ENCODE measurements at regions of chr16 and their contacts with region 1.

Region 1: GRCh38 chr16:66406534-66407221 is 20.4 kb upstream of the BEAN1 start:
- DNase-seq: peak; percentile 71 to 88
- H3K4me3 ChIP-seq: peak overlapping the region; percentile 34 to 77 (median 56)
- H3K27ac ChIP-seq: peak overlapping the region in 1 of 2 donors; percentile 33
- H3K4me1 ChIP-seq: peaks cover 0 to 7% of the 10 kb centered on the region in 2 donors
- H3K27me3 ChIP-seq: no peaks in the 10 kb centered on the region
- CTCF ChIP-seq: peak; percentile 89 to 96 (median 90)
- POLR2A ChIP-seq: no peak

Region 2: GRCh38 chr16:66483689-66484481 is 77.2 kb after region 1 on chr16:
- intact Hi-C with region 1: loop called (anchors 5 kb)
- DNase-seq: peak; percentile 60 to 80
- H3K4me3 ChIP-seq: no peak overlapping the region
- H3K27ac ChIP-seq: no peak overlapping the region
- H3K4me1 ChIP-seq: peaks cover 6 to 8% of the 10 kb centered on the region in 2 donors
- H3K27me3 ChIP-seq: no peaks in the 10 kb centered on the region
- CTCF ChIP-seq: peak; percentile 40 to 93 (median 84)
- POLR2A ChIP-seq: no peak

Region 3: DNA sequence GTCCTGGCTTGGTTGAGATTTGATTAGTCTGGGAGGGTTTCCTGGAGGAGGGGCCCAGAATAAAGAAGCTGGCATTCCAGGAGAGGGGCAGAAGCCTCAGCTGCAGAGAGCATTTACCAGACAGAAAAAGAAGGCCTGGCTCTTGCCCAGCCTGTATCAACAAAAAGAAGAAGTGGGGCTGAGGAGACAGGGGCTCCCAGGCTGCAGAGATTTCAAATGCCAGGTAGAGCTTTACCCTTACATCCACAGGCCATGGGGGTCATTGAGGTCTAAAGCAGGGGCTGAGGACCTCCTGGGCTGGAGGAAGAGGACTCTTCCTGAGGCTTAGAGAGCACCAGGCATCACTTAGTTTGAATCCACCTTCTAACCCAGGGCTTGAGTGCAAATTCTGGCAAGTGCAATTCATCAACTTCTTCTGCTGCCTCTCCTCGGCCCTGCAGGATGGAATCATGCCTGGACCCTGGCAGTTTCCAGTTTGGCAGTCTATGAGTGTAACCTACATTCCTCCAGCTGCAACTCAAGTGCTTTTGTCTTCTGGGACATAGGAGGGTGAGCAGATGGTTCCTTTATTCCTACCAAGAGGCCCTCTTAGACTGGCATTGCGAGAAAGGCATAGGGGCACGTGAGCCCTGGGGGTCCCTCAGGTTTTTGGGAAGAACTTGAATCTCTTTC is 452.9 kb after region 1 on chr16:
- intact Hi-C with region 1: loop called (anchors 10 kb)
- DNase-seq: no peak
- H3K4me3 ChIP-seq: no peak overlapping the region
- H3K27ac ChIP-seq: no peak overlapping the region
- H3K4me1 ChIP-seq: no peaks in the 10 kb centered on the region
- H3K27me3 ChIP-seq: no peaks in the 10 kb centered on the region
- CTCF ChIP-seq: no peak
- POLR2A ChIP-seq: no peak

Measured in breast epithelium (tissue), 4 donors.